CD8-positive, alpha-beta T cell (primary cell): ENCODE measurements at regions of chr2 and their contacts with region 1.

Region 1: DNA sequence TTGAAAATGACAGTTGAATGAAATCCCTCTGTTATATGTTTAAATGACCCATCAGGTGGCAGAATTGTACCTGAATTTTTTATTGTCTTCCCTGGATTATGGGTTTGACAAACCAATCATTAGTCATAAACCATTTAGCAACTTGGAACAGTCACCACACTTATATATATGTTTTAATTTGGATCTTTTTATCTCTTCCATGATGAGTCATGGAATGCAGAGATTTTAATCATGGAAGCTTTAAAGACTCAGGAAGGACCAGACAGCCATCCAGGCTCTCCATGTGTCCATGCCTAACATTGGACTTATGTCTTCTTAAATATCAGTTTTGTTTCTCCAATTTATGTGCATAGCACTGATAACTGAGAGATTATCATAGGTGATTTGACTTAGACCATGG is 188.3 kb upstream of the ZSWIM2 start:
- DNase-seq: no peak
- ATAC-seq: no peak
- H3K4me3 ChIP-seq: no peak overlapping the region
- H3K4me3 Mint-ChIP-seq: no peak overlapping the region
- H3K27ac ChIP-seq: no peak overlapping the region
- H3K27ac Mint-ChIP-seq: no peak overlapping the region
- H3K4me1 ChIP-seq: no peaks in the 10 kb centered on the region
- H3K4me1 Mint-ChIP-seq: no peaks in the 10 kb centered on the region
- H3K27me3 ChIP-seq: no peaks in the 10 kb centered on the region
- H3K27me3 Mint-ChIP-seq: no peaks in the 10 kb centered on the region
- CTCF ChIP-seq: no peak

Region 2: GRCh38 chr2:187017438-187017837 is 19.9 kb before region 1 on chr2:
- CTCF ChIA-PET with region 1: no interaction called
- POLR2A ChIA-PET with region 1: no interaction called
- intact Hi-C with region 1: no loop called
- DNase-seq: no peak
- ATAC-seq: no peak
- H3K4me3 ChIP-seq: no peak overlapping the region
- H3K4me3 Mint-ChIP-seq: no peak overlapping the region
- H3K27ac ChIP-seq: no peak overlapping the region
- H3K27ac Mint-ChIP-seq: no peak overlapping the region
- H3K4me1 ChIP-seq: no peaks in the 10 kb centered on the region
- H3K4me1 Mint-ChIP-seq: no peaks in the 10 kb centered on the region
- H3K27me3 ChIP-seq: no peaks in the 10 kb centered on the region
- H3K27me3 Mint-ChIP-seq: no peaks in the 10 kb centered on the region
- CTCF ChIP-seq: no peak

Region 3: DNA sequence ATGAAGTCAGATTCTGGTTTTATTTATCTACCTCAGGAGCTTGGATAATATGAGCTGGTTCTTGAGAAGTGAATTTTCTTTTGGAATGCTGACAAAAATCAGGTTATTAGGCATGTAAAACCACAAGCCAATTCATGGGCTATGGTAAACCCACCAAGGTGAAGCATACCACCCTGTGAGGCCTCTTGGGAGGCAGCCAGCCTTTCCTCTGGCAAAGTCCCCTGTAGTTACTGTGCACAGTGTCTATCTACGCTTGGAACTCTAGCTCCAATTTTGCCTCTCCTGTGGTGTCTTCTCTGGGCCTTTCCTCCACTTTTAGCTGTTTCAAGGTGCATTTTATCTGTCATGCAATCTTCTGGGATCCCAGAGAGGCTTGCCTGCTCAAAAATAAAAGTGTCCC is 54.4 kb after region 1 on chr2:
- CTCF ChIA-PET with region 1: no interaction called
- POLR2A ChIA-PET with region 1: no interaction called
- intact Hi-C with region 1: loop called in 1 of 2 experiments (anchors 2 kb)
- DNase-seq: no peak
- ATAC-seq: no peak
- H3K4me3 ChIP-seq: no peak overlapping the region
- H3K4me3 Mint-ChIP-seq: no peak overlapping the region
- H3K27ac ChIP-seq: no peak overlapping the region
- H3K27ac Mint-ChIP-seq: no peak overlapping the region
- H3K4me1 ChIP-seq: no peaks in the 10 kb centered on the region
- H3K4me1 Mint-ChIP-seq: no peaks in the 10 kb centered on the region
- H3K27me3 ChIP-seq: no peaks in the 10 kb centered on the region
- H3K27me3 Mint-ChIP-seq: no peaks in the 10 kb centered on the region
- CTCF ChIP-seq: no peak

Region 4: GRCh38 chr2:187612857-187613256 is 575.5 kb after region 1 on chr2:
- CTCF ChIA-PET with region 1: no interaction called
- POLR2A ChIA-PET with region 1: no interaction called
- intact Hi-C with region 1: no loop called
- DNase-seq: no peak
- ATAC-seq: no peak
- H3K4me3 ChIP-seq: no peak overlapping the region
- H3K4me3 Mint-ChIP-seq: no peak overlapping the region
- H3K27ac ChIP-seq: no peak overlapping the region
- H3K27ac Mint-ChIP-seq: no peak overlapping the region
- H3K4me1 ChIP-seq: no peaks in the 10 kb centered on the region
- H3K4me1 Mint-ChIP-seq: no peaks in the 10 kb centered on the region
- H3K27me3 ChIP-seq: no peaks in the 10 kb centered on the region
- H3K27me3 Mint-ChIP-seq: no peaks in the 10 kb centered on the region
- CTCF ChIP-seq: no peak